Ascending aorta (tissue), 2 donors: ENCODE measurements at regions of chr20 and their contacts with region 1.

Region 1: GRCh38 chr20:53828682-53829254 is 235.1 kb upstream of the ZNF217 start:
- DNase-seq: peak in 1 of 2 donors; percentile 75
- H3K4me3 ChIP-seq: peak overlapping the region; percentile 48 to 49
- H3K27ac ChIP-seq: peak overlapping the region; percentile 85 to 93
- H3K4me1 ChIP-seq: peaks cover 0 to 19% of the 10 kb centered on the region in 2 donors
- H3K27me3 ChIP-seq: no peaks in the 10 kb centered on the region
- CTCF ChIP-seq: no peak

Region 2: GRCh38 chr20:53594068-53595017 is 234.4 kb before region 1 on chr20:
- intact Hi-C with region 1: loop called (anchors 5 kb)
- DNase-seq: peak; percentile 64 to 98
- H3K4me3 ChIP-seq: peak overlapping the region; percentile 92 to 98
- H3K27ac ChIP-seq: peak overlapping the region; percentile 95 to 99
- H3K4me1 ChIP-seq: peaks cover 0 to 13% of the 10 kb centered on the region in 2 donors
- H3K27me3 ChIP-seq: no peaks in the 10 kb centered on the region
- CTCF ChIP-seq: no peak

Region 3: GRCh38 chr20:53692413-53693067 is 136.2 kb before region 1 on chr20:
- intact Hi-C with region 1: no loop called
- DNase-seq: peak in 1 of 2 donors; percentile 75
- H3K4me3 ChIP-seq: no peak overlapping the region
- H3K27ac ChIP-seq: no peak overlapping the region
- H3K4me1 ChIP-seq: peaks cover 0 to 4% of the 10 kb centered on the region in 2 donors
- H3K27me3 ChIP-seq: no peaks in the 10 kb centered on the region
- CTCF ChIP-seq: no peak

Region 4: DNA sequence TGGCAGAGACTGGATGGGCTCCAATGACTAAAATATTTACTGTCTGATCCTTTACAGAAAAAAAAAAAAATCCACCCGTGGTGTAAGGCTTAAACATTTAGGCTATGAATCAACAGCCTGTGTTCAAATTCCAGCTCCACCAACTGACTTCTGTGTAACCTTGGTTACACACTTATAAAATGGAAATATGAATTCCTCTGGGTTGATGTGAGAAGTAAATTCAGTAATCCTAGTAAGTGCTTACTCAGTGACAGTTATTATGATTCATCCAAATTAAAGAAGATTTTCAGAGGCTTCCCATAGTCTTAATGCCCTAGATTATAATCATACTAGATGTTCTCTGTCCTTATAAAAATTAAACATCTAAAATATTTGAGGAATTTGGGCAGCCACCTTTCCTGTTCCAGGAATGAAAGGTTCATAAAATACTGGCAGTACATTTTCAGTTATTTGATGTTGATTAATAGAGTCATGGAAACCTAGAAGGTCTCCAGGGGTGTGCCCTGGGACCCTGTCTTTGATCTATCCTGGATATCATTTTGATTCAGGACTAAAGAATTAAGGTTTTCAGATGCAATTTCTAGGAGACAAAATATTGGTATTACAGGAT is 54.9 kb before region 1 on chr20:
- intact Hi-C with region 1: loop called (anchors 1 kb)
- DNase-seq: no peak
- H3K4me3 ChIP-seq: no peak overlapping the region
- H3K27ac ChIP-seq: peak overlapping the region; percentile 68 to 72
- H3K4me1 ChIP-seq: peaks cover 0 to 12% of the 10 kb centered on the region in 2 donors
- H3K27me3 ChIP-seq: no peaks in the 10 kb centered on the region
- CTCF ChIP-seq: no peak

Region 5: DNA sequence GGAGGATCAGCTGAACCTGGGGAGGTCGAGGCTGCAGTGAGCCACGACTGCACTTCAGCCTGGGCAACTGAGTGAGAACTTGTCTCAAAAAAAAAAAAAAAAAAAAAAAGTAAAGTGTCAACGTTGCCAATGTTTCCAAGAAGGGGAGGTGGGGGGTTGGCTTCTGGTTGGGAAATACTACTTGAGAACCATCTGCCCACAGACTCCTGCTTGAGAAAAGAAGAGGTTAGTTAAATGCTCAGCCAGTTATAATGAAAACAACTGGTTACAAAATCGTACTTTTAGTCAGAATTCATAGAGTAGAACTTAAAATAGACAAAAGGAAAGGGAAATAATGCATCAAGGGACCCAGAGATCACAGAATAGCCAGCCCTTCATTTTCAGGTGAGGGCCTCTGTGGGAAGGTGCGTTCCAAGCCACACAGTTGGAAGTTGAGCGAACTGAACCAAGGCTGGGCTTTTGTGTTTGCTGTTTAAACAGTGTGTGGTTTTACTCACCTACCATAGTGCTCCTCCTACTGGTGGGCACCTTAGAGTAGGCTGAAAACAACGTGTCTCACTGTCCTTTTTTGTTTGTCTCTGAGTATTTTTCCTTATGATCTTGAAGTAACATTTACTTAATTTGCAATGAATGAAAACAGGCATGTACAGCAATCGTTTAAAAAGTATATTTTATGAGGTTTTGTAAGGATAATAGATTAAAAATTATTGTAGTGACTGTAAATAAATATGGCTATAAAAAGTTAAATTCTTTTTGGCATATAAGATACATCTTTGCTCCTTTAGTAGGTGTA is 40.9 kb after region 1 on chr20:
- intact Hi-C with region 1: loop called (anchors 5 kb)
- DNase-seq: peak in 1 of 2 donors; percentile 79
- H3K4me3 ChIP-seq: no peak overlapping the region
- H3K27ac ChIP-seq: no peak overlapping the region
- H3K4me1 ChIP-seq: peaks cover 0 to 29% of the 10 kb centered on the region in 2 donors
- H3K27me3 ChIP-seq: no peaks in the 10 kb centered on the region
- CTCF ChIP-seq: peak; percentile 47 to 73 (median 64)

Region 6: GRCh38 chr20:54044156-54044555 is 215.4 kb after region 1 on chr20:
- intact Hi-C with region 1: loop called (anchors 10 kb)
- DNase-seq: no peak
- H3K4me3 ChIP-seq: no peak overlapping the region
- H3K27ac ChIP-seq: no peak overlapping the region
- H3K4me1 ChIP-seq: no peaks in the 10 kb centered on the region
- H3K27me3 ChIP-seq: no peaks in the 10 kb centered on the region
- CTCF ChIP-seq: no peak